Endothelial cell of umbilical vein (primary cell): ENCODE measurements at regions of chr3 and their contacts with region 1.

Region 1: DNA sequence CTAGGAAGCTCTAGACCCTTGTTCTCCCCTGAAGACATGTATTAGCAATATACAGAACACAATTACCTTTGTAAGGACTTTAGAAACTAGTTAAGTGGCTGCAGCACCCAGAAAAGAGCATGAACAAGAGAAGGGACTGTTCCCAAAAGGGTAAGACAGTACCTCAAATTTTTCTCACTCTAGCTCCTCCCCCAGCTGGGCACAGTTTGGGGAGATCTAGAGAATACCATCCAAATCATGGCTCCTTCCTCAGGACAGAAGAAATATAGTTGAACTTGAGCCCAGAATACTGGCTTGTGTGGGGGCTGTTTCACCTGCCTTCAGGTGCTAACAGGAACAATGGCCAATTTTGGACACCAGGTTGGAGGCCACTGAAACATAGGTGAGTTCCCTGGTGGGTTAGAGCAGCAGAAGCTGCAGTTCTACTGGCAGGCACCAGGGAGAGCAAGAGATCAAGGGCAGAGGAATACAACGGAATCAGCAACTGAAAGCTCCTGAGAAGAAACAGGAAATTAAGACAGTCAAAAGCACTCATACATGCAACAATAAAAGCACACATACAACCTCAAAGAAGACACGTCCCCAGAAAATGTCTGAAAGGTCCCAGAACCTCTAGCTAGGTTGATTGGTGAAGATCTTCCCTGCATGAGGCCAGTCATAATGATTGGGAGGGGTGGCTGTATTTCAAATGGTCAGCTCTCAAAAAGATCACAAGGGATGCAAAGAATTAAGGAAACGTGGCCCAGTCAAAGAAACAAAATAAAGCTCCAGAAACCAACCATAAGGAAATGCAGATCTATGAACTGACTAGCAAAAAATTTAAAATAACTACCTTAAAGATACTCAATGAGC is 104.9 kb upstream of the ASB14 start:
- DNase-seq: peak; percentile 62
- H3K4me3 ChIP-seq: no peak overlapping the region
- H3K27ac ChIP-seq: no peak overlapping the region
- H3K4me1 ChIP-seq: no peaks in the 10 kb centered on the region
- H3K27me3 ChIP-seq: no peaks in the 10 kb centered on the region
- CTCF ChIP-seq: peak; percentile 90 to 95
- POLR2A ChIP-seq: no peak

Region 2: DNA sequence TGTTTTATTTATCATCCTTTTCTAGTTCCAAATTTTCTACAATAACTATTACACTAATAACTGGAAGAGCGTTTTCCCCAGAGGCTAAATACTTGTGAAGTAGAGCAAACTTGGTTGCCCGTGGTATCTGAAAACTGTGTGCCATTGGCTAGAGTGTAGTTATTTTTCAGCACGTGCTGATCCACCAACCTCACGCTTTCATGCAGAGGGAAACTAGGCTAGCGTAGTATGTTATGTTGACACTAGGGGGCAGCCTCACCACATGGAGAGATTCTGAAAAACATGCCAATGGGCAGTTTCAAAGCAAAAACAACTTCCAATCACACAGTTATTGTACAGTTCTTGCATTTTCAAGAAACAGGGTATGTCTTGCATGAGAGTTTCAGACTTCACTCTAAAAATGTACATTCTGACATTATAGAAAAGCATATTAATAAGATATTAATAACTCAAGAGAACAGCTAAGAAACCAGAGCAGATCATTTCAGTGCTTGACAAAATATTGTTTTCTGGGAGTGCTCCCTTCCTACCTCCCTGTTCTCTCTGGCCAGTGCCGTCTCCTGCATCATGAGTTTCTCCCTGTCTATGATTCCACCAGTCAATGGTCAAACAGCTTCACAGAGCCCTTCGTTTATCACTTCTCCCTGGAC is 297.2 kb before region 1 on chr3:
- CTCF ChIA-PET with region 1: interaction called, 5 read pairs
- POLR2A ChIA-PET with region 1: no interaction called
- dilution Hi-C with region 1: no loop called
- intact Hi-C with region 1: loop called (anchors 2 kb)
- DNase-seq: peak; percentile 83
- H3K4me3 ChIP-seq: no peak overlapping the region
- H3K27ac ChIP-seq: no peak overlapping the region
- H3K4me1 ChIP-seq: peaks cover 6% of the 10 kb centered on the region
- H3K27me3 ChIP-seq: no peaks in the 10 kb centered on the region
- CTCF ChIP-seq: peak; percentile 77 to 80
- POLR2A ChIP-seq: no peak

Region 3: GRCh38 chr3:57354768-57355167 is 42.6 kb before region 1 on chr3:
- CTCF ChIA-PET with region 1: no interaction called
- POLR2A ChIA-PET with region 1: no interaction called
- dilution Hi-C with region 1: no loop called
- intact Hi-C with region 1: no loop called
- DNase-seq: no peak
- H3K4me3 ChIP-seq: no peak overlapping the region
- H3K27ac ChIP-seq: no peak overlapping the region
- H3K4me1 ChIP-seq: no peaks in the 10 kb centered on the region
- H3K27me3 ChIP-seq: no peaks in the 10 kb centered on the region
- CTCF ChIP-seq: no peak
- POLR2A ChIP-seq: no peak

Region 4: GRCh38 chr3:57421336-57421735 is 23.9 kb after region 1 on chr3:
- CTCF ChIA-PET with region 1: interaction called, 15 read pairs
- POLR2A ChIA-PET with region 1: no interaction called
- dilution Hi-C with region 1: no loop called
- intact Hi-C with region 1: no loop called
- DNase-seq: no peak
- H3K4me3 ChIP-seq: no peak overlapping the region
- H3K27ac ChIP-seq: no peak overlapping the region
- H3K4me1 ChIP-seq: no peaks in the 10 kb centered on the region
- H3K27me3 ChIP-seq: no peaks in the 10 kb centered on the region
- CTCF ChIP-seq: no peak
- POLR2A ChIP-seq: no peak

Region 5: GRCh38 chr3:57512166-57512565 is 114.8 kb after region 1 on chr3:
- CTCF ChIA-PET with region 1: interaction called, 10 read pairs
- POLR2A ChIA-PET with region 1: no interaction called
- dilution Hi-C with region 1: no loop called
- intact Hi-C with region 1: no loop called
- DNase-seq: peak; percentile 36
- H3K4me3 ChIP-seq: no peak overlapping the region
- H3K27ac ChIP-seq: no peak overlapping the region
- H3K4me1 ChIP-seq: no peaks in the 10 kb centered on the region
- H3K27me3 ChIP-seq: no peaks in the 10 kb centered on the region
- CTCF ChIP-seq: no peak
- POLR2A ChIP-seq: no peak

Region 6: GRCh38 chr3:57597122-57597923 is 199.9 kb after region 1 on chr3 and contains the start of gene ARF4:
- CTCF ChIA-PET with region 1: interaction called, 27 read pairs
- POLR2A ChIA-PET with region 1: interaction called, 3 read pairs
- dilution Hi-C with region 1: no loop called
- intact Hi-C with region 1: loop called (anchors 1 kb)
- DNase-seq: peak; percentile 100
- H3K4me3 ChIP-seq: peak within 1 kb of the TSS; percentile 82 to 93 (median 86)
- H3K27ac ChIP-seq: peak within 1 kb of the TSS; percentile 99
- H3K4me1 ChIP-seq: peaks cover 34% of the 10 kb centered on the region
- H3K27me3 ChIP-seq: no peaks in the 10 kb centered on the region
- CTCF ChIP-seq: peak in 1 of 2 donors; percentile 41
- POLR2A ChIP-seq: peak; percentile 98
- total RNA-seq, gene ARF4: 243 and 249 TPM in 2 replicates

Region 7: DNA sequence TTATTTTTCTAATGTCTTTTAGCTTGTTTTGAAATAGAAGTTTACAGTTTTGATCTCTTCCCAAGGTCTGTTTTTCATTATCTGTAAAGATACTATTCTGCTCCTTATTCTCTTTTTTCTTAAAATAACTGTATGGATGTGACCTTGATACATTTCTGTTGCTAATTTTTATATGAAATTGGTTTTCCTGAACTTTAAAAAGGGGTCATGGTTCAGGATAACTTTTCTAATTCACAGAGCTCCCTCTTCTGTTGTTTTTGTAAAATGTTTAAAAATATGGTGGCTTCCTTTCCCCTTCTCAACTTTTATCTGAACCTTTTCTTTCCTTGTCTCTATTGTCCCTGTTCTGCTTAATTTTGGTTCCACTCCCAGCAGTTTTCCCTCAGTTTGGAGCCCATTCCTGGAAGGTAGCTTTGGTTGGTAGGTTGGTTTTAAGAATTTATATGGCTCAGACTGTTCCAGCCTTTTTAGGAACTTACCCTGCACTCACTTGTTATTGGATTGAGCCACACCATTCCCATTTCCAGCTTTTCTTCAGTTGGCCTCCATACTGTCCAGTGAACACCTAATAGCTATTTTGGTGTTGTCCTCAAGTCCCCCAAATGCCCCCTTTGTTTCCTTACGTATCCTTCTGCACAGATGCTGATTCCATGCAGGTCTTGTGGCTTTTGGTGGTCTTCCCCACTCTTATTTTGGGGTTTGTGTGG is 429.0 kb after region 1 on chr3:
- CTCF ChIA-PET with region 1: interaction called, 43 read pairs
- POLR2A ChIA-PET with region 1: no interaction called
- dilution Hi-C with region 1: no loop called
- intact Hi-C with region 1: no loop called
- DNase-seq: peak; percentile 21
- H3K4me3 ChIP-seq: no peak overlapping the region
- H3K27ac ChIP-seq: no peak overlapping the region
- H3K4me1 ChIP-seq: no peaks in the 10 kb centered on the region
- H3K27me3 ChIP-seq: no peaks in the 10 kb centered on the region
- CTCF ChIP-seq: no peak
- POLR2A ChIP-seq: no peak